ENCODE measurements at regions of chr1 and their contacts with region 1.

Region 1: GRCh38 chr1:35769188-35769758 is 505 bp downstream of the CLSPN start:
- DNase-seq: no peak
- H3K4me3 ChIP-seq: peak overlapping the region; percentile 81
- CTCF ChIP-seq: no peak

Region 2: GRCh38 chr1:35577071-35577998 is 191.9 kb before region 1 on chr1:
- CTCF ChIA-PET with region 1: interaction called, 10 read pairs
- POLR2A ChIA-PET with region 1: no interaction called
- DNase-seq: no peak
- H3K4me3 ChIP-seq: no peak overlapping the region
- CTCF ChIP-seq: no peak

Region 3: GRCh38 chr1:35753626-35754260 is 15.5 kb before region 1 on chr1:
- CTCF ChIA-PET with region 1: interaction called, 13 read pairs
- POLR2A ChIA-PET with region 1: interaction called, 4 read pairs
- DNase-seq: no peak
- H3K4me3 ChIP-seq: no peak overlapping the region
- CTCF ChIP-seq: no peak

Region 4: GRCh38 chr1:35788139-35788538 is 18.9 kb after region 1 on chr1:
- CTCF ChIA-PET with region 1: interaction called, 10 read pairs
- POLR2A ChIA-PET with region 1: no interaction called
- DNase-seq: no peak
- H3K4me3 ChIP-seq: no peak overlapping the region
- CTCF ChIP-seq: no peak

Region 5: DNA sequence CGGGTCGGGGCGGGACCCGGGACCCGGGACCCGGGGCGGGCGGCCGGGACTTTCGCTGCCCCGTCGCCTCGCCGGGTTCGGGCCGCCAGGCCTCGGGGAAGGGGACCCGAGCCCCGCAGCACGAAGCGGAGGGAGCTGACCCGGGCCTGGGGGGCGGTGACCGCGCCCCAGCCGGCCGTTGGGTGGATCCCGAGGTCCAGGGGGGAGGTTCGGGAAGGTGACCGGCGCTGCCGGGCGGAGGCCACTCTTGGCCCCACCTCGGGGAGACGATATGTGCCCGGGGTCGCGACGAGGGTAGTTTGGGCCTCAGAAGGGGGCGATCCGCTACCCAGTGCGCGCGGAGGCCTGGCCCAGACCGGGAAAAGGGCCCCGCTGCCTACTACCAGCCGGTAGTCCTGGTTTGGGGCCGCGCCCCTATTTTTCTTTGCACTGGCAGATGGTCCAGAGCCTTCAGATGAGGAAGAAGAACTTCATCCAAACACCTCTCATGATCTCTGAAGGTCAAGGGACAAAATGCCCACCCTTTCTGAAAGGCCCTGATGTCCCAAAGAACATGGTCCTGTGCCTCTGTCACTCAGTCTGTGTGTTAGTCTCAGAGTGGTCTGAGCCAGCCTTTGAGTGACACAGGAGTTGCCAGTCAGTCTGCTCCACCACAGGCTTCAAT is 39.3 kb after region 1 on chr1:
- CTCF ChIA-PET with region 1: no interaction called
- POLR2A ChIA-PET with region 1: no interaction called
- DNase-seq: no peak
- H3K4me3 ChIP-seq: peak overlapping the region; percentile 72
- CTCF ChIP-seq: no peak